ENCODE measurements at regions of chr6 and their contacts with region 1.

Region 1: DNA sequence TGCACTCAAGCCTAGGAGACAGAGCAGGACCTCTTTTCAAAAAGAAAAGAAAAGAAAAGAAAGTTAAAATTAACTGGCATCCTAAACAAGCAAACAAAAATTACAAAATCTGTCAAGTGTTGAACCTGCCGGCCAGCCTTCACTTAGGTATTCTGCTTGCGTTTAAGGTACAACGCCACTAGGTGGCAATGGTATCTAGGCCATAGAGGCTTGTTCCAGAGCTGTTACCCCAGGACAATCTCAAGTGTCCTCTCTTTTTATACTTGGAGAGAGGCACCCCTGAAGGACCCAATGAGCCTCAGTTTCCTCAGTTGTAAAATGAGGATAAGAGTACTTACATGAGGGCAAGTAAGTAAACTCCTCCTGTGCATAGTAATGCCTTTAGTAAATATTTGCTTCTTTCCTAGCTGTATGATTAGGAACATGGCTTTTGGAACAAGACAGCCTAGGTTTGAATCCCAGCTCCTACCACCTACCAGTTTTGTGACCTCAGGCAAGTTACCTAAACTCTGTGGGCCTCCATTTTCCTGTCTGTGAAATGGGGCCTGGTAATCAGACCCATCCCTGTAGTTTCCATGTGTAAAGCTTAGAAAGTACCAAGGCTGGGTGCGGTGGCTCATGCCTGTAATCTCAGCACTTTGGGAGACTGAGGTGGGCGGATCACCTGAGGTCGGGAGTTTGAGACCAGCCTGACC is 5.8 kb upstream of the PACSIN1 start:
- DNase-seq: no peak
- ATAC-seq: peak; percentile 81 to 95 (median 90)
- H3K4me3 ChIP-seq: no peak overlapping the region
- H3K27ac ChIP-seq: no peak overlapping the region
- H3K4me1 ChIP-seq: no peaks in the 10 kb centered on the region
- H3K27me3 ChIP-seq: peaks cover 0 to 6% (median 0%) of the 10 kb centered on the region in 3 donors
- CTCF ChIP-seq: peak; percentile 81

Region 2: DNA sequence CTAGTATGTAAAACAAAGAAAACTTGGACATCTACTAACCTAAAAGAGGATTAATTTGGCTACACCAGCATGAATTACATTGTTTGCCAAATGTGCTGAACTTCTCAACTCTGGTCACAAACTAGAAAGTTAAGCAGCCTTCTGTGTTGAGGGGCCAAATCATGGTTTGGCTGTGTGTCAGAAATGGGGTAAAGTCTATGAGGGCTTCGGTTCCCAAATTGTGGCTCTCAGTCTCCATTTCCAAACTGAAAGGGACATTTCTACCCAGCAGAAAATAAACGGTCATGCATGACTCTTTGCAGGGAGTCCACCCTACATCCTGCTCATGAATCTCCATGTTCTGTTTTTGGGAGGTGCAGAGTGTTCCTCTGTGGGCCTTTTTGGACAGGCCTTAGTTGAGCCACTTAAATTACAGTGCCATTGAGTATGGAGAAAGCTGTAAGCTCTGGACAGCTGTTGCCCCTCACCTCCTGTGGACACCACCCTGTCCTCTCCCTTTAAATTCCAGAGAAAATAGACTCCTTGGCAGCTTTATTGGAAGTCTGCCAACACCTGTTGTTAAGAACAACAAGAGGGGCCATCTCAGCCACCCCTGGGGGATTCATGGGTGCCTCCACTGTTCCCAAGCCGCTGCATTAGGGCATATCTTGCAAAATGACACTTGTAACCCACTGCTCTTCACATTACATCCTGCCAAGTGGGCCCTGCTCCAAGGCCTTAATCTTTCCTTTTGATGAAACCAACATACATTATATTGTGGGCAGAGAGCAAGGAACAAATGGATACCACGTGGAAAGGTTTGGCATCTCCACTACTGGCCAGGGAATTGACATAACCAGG is 269.8 kb after region 1 on chr6:
- intact Hi-C with region 1: loop called in 1 of 2 experiments (anchors 10 kb)
- DNase-seq: no peak
- ATAC-seq: no peak
- H3K4me3 ChIP-seq: no peak overlapping the region
- H3K27ac ChIP-seq: no peak overlapping the region
- H3K4me1 ChIP-seq: no peaks in the 10 kb centered on the region
- H3K27me3 ChIP-seq: no peaks in the 10 kb centered on the region
- CTCF ChIP-seq: no peak

Region 3: GRCh38 chr6:35048631-35049083 is 588.6 kb after region 1 on chr6:
- intact Hi-C with region 1: no loop called
- DNase-seq: peak in 1 of 2 donors; percentile 67
- ATAC-seq: peak in 3 of 4 donors; percentile 18 to 24 (median 18)
- H3K4me3 ChIP-seq: peak overlapping the region; percentile 33
- H3K27ac ChIP-seq: peak overlapping the region; percentile 76
- H3K4me1 ChIP-seq: peaks cover 64% of the 10 kb centered on the region
- H3K27me3 ChIP-seq: no peaks in the 10 kb centered on the region
- CTCF ChIP-seq: no peak

Region 4: GRCh38 chr6:35342258-35343091 is 882.4 kb after region 1 on chr6 and contains the start of gene PPARD:
- intact Hi-C with region 1: no loop called
- DNase-seq: peak; percentile 99
- ATAC-seq: peak; percentile 94 to 98 (median 96)
- H3K4me3 ChIP-seq: peak within 1 kb of the TSS; percentile 99
- H3K27ac ChIP-seq: peak within 1 kb of the TSS; percentile 99
- H3K4me1 ChIP-seq: peaks cover 44% of the 10 kb centered on the region
- H3K27me3 ChIP-seq: no peaks in the 10 kb centered on the region
- CTCF ChIP-seq: peak; percentile 99
- total RNA-seq, gene PPARD: 19.4 to 47.2 (median 38.4) TPM

Measured in psoas muscle (tissue), 8 donors.